GM23248 (cell line): ENCODE measurements at regions of chr6 and their contacts with region 1.

Region 1: GRCh38 chr6:136226027-136226673 is 24.0 kb downstream of the MTFR2 start:
- DNase-seq: peak; percentile 72
- H3K4me3 ChIP-seq: peak overlapping the region; percentile 61
- H3K27ac ChIP-seq: peak overlapping the region; percentile 19
- H3K4me1 ChIP-seq: peaks cover 8% of the 10 kb centered on the region
- H3K27me3 ChIP-seq: no peaks in the 10 kb centered on the region

Region 2: GRCh38 chr6:134774201-134774638 is 1451.9 kb before region 1 on chr6:
- in situ Hi-C with region 1: no loop called
- DNase-seq: peak; percentile 55
- H3K4me3 ChIP-seq: no peak overlapping the region
- H3K27ac ChIP-seq: peak overlapping the region; percentile 9
- H3K4me1 ChIP-seq: peaks cover 10% of the 10 kb centered on the region
- H3K27me3 ChIP-seq: no peaks in the 10 kb centered on the region

Region 3: DNA sequence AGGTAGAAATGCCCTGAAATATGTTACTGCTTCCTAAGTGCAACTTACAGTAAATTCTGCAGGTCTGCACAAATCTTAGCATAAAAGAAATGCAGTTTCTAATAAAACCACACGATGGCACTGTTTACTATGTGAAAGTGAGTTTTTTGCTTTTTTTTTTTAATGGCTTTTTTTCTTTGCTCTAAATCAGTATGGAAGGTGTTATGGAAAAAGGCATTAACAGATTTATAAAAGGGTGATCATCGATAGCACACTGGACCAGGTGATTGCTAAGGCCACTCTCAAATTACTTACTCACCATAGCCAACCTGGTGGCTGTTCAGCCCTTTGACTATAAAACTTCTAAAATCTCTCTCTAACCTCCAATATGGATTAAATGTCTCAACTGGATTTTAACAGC is 774.5 kb before region 1 on chr6:
- in situ Hi-C with region 1: loop called (anchors 10 kb)
- DNase-seq: peak; percentile 56
- H3K4me3 ChIP-seq: no peak overlapping the region
- H3K27ac ChIP-seq: no peak overlapping the region
- H3K4me1 ChIP-seq: no peaks in the 10 kb centered on the region
- H3K27me3 ChIP-seq: no peaks in the 10 kb centered on the region

Region 4: DNA sequence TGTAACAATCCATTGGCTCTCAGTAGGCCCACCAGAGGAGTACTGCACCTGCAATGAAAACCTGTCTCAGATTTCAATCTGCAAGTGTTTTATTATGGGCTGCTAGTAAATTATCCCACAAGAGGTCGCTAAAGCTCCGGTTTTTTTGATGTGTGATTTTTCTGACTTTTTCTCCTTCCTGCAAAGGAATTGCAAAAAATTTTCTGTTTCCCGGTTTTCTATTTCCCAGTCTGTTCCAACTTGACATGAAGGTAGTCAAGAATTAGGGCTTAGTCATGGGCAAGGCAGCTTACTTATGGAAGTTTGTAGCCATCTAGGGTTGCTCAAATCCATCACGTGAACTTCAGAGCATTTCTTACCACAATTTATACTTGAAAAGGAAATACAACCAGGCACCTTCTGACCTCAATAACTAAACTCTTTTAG is 690.1 kb before region 1 on chr6:
- in situ Hi-C with region 1: loop called (anchors 10 kb)
- DNase-seq: peak; percentile 88
- H3K4me3 ChIP-seq: no peak overlapping the region
- H3K27ac ChIP-seq: peak overlapping the region; percentile 41
- H3K4me1 ChIP-seq: peaks cover 39% of the 10 kb centered on the region
- H3K27me3 ChIP-seq: no peaks in the 10 kb centered on the region